ENCODE measurements at regions of chr2 and their contacts with region 1.

Region 1: GRCh38 chr2:9555297-9556141 is at the start of gene ADAM17:
- DNase-seq: peak; percentile 92
- ATAC-seq: peak; percentile 87
- H3K4me3 Mint-ChIP-seq: peak within 1 kb of the TSS; percentile 97
- H3K27ac Mint-ChIP-seq: peak within 1 kb of the TSS; percentile 95
- H3K4me1 Mint-ChIP-seq: peaks cover 50% of the 10 kb centered on the region
- H3K27me3 Mint-ChIP-seq: no peaks in the 10 kb centered on the region
- total RNA-seq, gene ADAM17: 20.2 to 23.1 TPM

Region 2: DNA sequence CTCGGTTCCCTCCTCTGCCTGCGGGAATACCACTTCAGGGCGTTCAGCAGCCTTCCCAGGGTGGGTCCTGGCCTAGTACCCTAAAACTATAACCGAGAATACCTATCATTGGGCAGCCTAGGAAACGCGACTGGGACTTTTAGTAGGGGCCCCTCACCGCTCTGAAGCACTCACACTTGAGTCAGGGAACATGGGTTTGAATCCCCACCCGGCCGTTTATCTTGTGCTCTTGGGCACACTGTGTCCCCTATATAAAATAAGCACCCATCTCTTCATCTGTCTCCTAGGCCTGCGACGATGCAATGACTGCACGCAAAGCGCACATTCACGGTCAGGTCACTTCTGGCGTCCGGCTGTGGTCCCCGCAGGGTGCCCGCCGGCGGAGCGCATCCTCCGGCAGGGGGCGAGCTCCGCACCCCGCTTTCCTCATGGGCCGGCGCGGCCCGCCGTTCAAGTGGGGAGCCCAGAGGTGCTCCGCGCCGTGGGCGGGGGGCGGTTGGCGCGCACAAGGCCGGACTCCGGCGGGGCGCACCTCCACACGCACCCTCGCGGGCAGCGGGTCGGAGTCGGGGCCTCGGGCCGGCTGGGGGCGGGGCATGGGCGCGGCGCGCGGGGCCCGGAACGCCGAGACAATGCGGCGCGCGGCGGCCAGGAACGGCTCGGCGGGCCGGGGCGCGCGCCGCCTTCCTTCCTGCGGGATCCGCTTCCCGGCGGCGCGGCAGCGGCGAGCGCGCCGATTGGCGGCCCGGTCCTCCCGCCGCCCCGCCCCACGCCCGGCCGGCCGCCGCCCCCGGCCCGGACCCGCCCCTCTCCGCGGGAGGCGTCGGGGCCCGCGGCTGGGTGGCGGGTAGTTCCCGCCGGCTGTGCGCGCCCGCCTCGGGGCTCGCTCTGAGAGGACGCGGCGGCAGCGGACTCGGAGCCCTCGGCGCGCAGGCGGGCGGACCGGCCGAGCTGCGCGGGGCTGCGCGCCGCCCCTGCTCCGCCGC is 349.3 kb before region 1 on chr2 and contains the start of gene ASAP2:
- CTCF ChIA-PET with region 1: no interaction called
- POLR2A ChIA-PET with region 1: no interaction called
- intact Hi-C with region 1: loop called in 1 of 2 experiments (anchors 10 kb)
- DNase-seq: peak; percentile 70
- ATAC-seq: peak; percentile 74
- H3K4me3 Mint-ChIP-seq: peak within 1 kb of the TSS; percentile 62
- H3K27ac Mint-ChIP-seq: no peak within 1 kb of the TSS
- H3K4me1 Mint-ChIP-seq: peaks cover 11% of the 10 kb centered on the region
- H3K27me3 Mint-ChIP-seq: peaks cover 43% of the 10 kb centered on the region
- total RNA-seq, gene ASAP2: 0.21 to 0.26 TPM

Region 3: DNA sequence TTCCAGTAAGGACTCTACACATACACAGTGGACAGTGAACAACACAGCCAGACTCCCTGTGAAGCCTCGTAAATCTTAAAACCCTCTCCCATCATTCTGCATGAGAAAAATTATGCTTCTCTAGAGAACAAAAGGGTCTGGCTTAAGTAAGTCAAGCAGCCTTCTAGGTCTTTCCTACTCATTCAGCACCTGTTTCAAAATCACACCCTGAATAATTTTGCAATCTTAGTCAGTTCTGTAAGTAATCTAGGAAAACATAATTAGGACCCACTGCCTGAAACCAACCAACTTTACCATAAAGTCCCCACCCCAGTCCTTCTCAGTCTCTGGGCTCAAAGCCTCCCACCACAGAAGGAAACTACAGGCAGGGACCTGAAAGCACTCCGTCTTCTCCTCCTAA is 61.4 kb before region 1 on chr2:
- CTCF ChIA-PET with region 1: no interaction called
- POLR2A ChIA-PET with region 1: interaction called, 5 read pairs
- intact Hi-C with region 1: loop called (anchors 1 kb)
- DNase-seq: no peak
- ATAC-seq: peak; percentile 51
- H3K4me3 Mint-ChIP-seq: no peak overlapping the region
- H3K27ac Mint-ChIP-seq: peak overlapping the region; percentile 77
- H3K4me1 Mint-ChIP-seq: peaks cover 40% of the 10 kb centered on the region
- H3K27me3 Mint-ChIP-seq: no peaks in the 10 kb centered on the region

Region 4: GRCh38 chr2:9656270-9656766 is 100.8 kb after region 1 on chr2:
- CTCF ChIA-PET with region 1: interaction called, 5 read pairs
- POLR2A ChIA-PET with region 1: interaction called, 3 read pairs
- intact Hi-C with region 1: loop called in 1 of 2 experiments (anchors 1 kb)
- DNase-seq: peak; percentile 86
- ATAC-seq: peak; percentile 87
- H3K4me3 Mint-ChIP-seq: peak overlapping the region; percentile 26
- H3K27ac Mint-ChIP-seq: peak overlapping the region; percentile 89
- H3K4me1 Mint-ChIP-seq: peaks cover 37% of the 10 kb centered on the region
- H3K27me3 Mint-ChIP-seq: peaks cover 10% of the 10 kb centered on the region

Region 5: GRCh38 chr2:9753276-9753600 is 197.7 kb after region 1 on chr2:
- CTCF ChIA-PET with region 1: no interaction called
- POLR2A ChIA-PET with region 1: interaction called, 3 read pairs
- intact Hi-C with region 1: loop called (anchors 1 to 5 kb)
- DNase-seq: peak; percentile 84
- ATAC-seq: peak; percentile 84
- H3K4me3 Mint-ChIP-seq: peak overlapping the region; percentile 66
- H3K27ac Mint-ChIP-seq: peak overlapping the region; percentile 96
- H3K4me1 Mint-ChIP-seq: peaks cover 61% of the 10 kb centered on the region
- H3K27me3 Mint-ChIP-seq: peaks cover 18% of the 10 kb centered on the region

Region 6: DNA sequence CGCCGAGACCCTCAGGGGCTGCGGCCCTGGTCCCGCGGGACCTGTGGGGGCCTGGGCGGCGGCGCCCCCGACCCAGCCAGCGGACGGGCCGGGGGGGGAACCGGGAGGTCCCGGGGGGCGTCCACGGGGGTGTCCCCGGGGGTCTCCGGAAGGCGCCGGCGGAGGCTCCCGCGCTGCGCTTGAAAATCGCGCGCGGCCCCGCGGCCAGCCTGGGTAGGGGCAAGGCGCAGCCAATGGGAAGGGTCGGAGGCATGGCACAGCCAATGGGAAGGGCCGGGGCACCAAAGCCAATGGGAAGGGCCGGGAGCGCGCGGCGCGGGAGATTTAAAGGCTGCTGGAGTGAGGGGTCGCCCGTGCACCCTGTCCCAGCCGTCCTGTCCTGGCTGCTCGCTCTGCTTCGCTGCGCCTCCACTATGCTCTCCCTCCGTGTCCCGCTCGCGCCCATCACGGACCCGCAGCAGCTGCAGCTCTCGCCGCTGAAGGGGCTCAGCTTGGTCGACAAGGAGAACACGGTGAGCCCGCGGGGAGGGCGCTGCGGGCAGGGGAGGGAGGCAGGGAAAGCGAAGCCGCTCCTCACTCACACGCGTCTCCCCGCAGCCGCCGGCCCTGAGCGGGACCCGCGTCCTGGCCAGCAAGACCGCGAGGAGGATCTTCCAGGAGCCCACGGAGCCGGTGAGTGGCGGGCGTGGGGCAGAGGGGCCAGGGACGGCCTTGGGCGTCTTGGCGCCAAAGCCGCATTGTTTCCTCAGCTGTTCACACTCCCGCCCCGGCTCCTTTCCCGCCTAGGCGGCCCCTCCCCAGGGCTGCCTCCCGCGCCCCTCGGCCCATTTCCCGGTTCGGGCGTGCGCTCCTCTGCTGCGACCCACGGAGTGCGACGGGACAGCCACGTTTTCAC is 567.1 kb after region 1 on chr2 and contains the start of gene RRM2:
- CTCF ChIA-PET with region 1: no interaction called
- POLR2A ChIA-PET with region 1: no interaction called
- intact Hi-C with region 1: loop called in 1 of 2 experiments (anchors 1 kb)
- DNase-seq: peak; percentile 98
- ATAC-seq: peak; percentile 82
- H3K4me3 Mint-ChIP-seq: peak within 1 kb of the TSS; percentile 97
- H3K27ac Mint-ChIP-seq: peak within 1 kb of the TSS; percentile 98
- H3K4me1 Mint-ChIP-seq: peaks cover 37% of the 10 kb centered on the region
- H3K27me3 Mint-ChIP-seq: no peaks in the 10 kb centered on the region
- total RNA-seq, gene RRM2: 382 to 469 TPM

Region 7: GRCh38 chr2:10344105-10345066 is 788.9 kb after region 1 on chr2:
- CTCF ChIA-PET with region 1: no interaction called
- POLR2A ChIA-PET with region 1: no interaction called
- intact Hi-C with region 1: no loop called
- DNase-seq: no peak
- ATAC-seq: no peak
- H3K4me3 Mint-ChIP-seq: no peak overlapping the region
- H3K27ac Mint-ChIP-seq: peak overlapping the region; percentile 32
- H3K4me1 Mint-ChIP-seq: peaks cover 76% of the 10 kb centered on the region
- H3K27me3 Mint-ChIP-seq: no peaks in the 10 kb centered on the region

Measured in activated CD4-positive, alpha-beta T cell treated with anti-CD3 and anti-CD28 coated beads for 36 hours (primary cell).